ENCODE measurements at regions of chrX and their contacts with region 1.

Region 1: GRCh38 chrX:96540111-96540631 is 144.5 kb upstream of the DIAPH2 start:
- DNase-seq: no peak
- H3K4me3 ChIP-seq: no peak overlapping the region
- H3K27ac ChIP-seq: no peak overlapping the region
- H3K4me1 ChIP-seq: no peaks in the 10 kb centered on the region
- H3K27me3 ChIP-seq: no peaks in the 10 kb centered on the region
- CTCF ChIP-seq: no peak
- EP300 ChIP-seq: no peak
- POLR2A ChIP-seq: no peak

Region 2: GRCh38 chrX:94977562-94977961 is 1562.6 kb before region 1 on chrX:
- intact Hi-C with region 1: loop called in 1 of 4 experiments (anchors 10 kb)
- DNase-seq: no peak
- H3K4me3 ChIP-seq: no peak overlapping the region
- H3K27ac ChIP-seq: no peak overlapping the region
- H3K4me1 ChIP-seq: no peaks in the 10 kb centered on the region
- H3K27me3 ChIP-seq: no peaks in the 10 kb centered on the region
- CTCF ChIP-seq: no peak
- EP300 ChIP-seq: no peak
- POLR2A ChIP-seq: no peak